PC-3 (cell line): ENCODE measurements at regions of chr6 and their contacts with region 1.

Region 1: GRCh38 chr6:97925504-97925903 is 642.5 kb upstream of the MMS22L start:
- DNase-seq: peak; percentile 6
- ATAC-seq: no peak
- H3K4me3 ChIP-seq: no peak overlapping the region
- H3K27ac ChIP-seq: no peak overlapping the region
- H3K4me1 ChIP-seq: no peaks in the 10 kb centered on the region
- H3K27me3 ChIP-seq: peaks cover 14% of the 10 kb centered on the region; the same call in 1 of the 2 replicates
- CTCF ChIP-seq: 0 out of 2 replicates have a peak, but pooled peaks have one; percentile 23

Region 2: GRCh38 chr6:97497713-97498331 is 427.7 kb before region 1 on chr6:
- CTCF ChIA-PET with region 1: no interaction called
- POLR2A ChIA-PET with region 1: no interaction called
- intact Hi-C with region 1: loop called (anchors 1 kb)
- DNase-seq: peak; percentile 68
- ATAC-seq: peak; percentile 84
- H3K4me3 ChIP-seq: no peak overlapping the region
- H3K27ac ChIP-seq: no peak overlapping the region
- H3K4me1 ChIP-seq: no peaks in the 10 kb centered on the region
- H3K27me3 ChIP-seq: peaks cover 8% of the 10 kb centered on the region; the same call in 1 of the 2 replicates
- CTCF ChIP-seq: peak; percentile 80

Region 3: DNA sequence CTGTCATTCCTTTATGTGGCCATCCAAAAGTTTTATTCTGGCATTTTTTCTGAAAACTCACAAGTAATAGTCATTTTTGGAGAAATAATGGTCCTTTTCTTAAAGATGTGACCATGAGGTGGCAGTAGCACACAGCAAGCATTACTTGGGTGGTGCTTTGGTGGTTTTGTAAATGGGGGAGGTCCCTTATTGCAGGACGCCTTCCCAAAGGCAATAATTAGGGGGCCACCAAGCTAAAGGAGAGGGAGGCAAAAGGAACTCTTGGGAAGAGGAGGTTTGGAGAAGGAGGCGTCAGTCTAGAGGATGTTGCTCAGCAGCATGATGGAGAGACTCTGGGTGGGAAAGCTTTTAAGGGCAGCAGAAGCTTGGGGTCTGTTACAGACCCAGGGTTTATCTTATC is 219.9 kb before region 1 on chr6:
- CTCF ChIA-PET with region 1: no interaction called
- POLR2A ChIA-PET with region 1: no interaction called
- intact Hi-C with region 1: loop called (anchors 10 kb)
- DNase-seq: peak; percentile 9
- ATAC-seq: no peak
- H3K4me3 ChIP-seq: no peak overlapping the region
- H3K27ac ChIP-seq: no peak overlapping the region
- H3K4me1 ChIP-seq: no peaks in the 10 kb centered on the region
- H3K27me3 ChIP-seq: no peaks in the 10 kb centered on the region
- CTCF ChIP-seq: peak; percentile 64

Region 4: GRCh38 chr6:97876711-97877110 is 48.8 kb before region 1 on chr6:
- CTCF ChIA-PET with region 1: no interaction called
- POLR2A ChIA-PET with region 1: no interaction called
- intact Hi-C with region 1: no loop called
- DNase-seq: no peak
- ATAC-seq: no peak
- H3K4me3 ChIP-seq: no peak overlapping the region
- H3K27ac ChIP-seq: no peak overlapping the region
- H3K4me1 ChIP-seq: no peaks in the 10 kb centered on the region
- H3K27me3 ChIP-seq: no peaks in the 10 kb centered on the region
- CTCF ChIP-seq: no peak